Activated naive CD8-positive, alpha-beta T cell treated with anti-CD3 and anti-CD28 coated beads, Interleukin-2, amount 10 ng/mL, durations not matched to agents 7 days and 5 days (primary cell): ENCODE measurements at regions of chr16 and their contacts with region 1.

Region 1: DNA sequence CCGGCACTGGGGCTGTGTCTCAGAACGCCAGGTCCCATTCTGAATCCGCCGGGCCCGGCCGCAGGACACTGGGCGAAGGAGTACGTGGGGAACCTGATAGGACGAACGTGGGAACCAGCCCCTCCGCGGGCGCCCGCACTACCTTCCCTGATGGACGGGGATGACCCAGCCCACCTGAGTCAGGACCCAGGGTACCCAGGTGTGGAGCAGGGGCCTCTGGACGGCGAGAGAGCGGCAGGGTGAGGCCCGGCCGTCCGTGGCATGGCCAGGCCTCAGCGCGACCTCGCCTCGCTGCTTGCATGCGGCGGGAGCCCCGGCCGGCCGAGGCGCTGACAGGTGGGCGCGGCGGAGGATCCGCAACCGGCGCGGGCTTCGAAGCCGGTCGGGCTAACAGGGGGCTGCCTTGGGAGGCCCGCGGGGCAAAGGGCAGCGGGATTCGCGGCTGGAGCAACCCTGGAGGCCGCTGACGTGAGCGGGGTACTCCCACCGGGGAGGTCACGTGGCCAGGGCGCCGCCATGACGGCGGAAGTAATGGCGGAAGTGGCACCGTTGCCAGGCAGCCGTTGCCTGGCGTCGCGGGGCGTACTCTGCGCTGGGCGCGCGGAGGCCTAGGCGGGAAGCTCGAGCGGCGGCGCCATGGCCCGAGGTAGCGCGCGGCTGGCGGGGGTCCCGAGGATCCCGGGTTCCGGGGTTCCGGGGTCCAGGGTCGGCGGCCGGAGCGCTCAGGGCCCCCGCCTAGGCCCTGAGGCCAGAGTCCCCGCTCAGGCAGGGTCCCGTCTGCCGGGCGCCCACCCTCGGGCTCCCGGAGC is at the start of gene WDR90:
- DNase-seq: peak; percentile 95
- ATAC-seq: peak; percentile 88
- H3K4me3 Mint-ChIP-seq: peak within 1 kb of the TSS; percentile 80
- H3K27ac Mint-ChIP-seq: peak within 1 kb of the TSS; percentile 73
- H3K4me1 Mint-ChIP-seq: peaks cover 3% of the 10 kb centered on the region
- H3K27me3 Mint-ChIP-seq: no peaks in the 10 kb centered on the region
- total RNA-seq, gene WDR90: 73.2 to 79.1 TPM

Region 2: GRCh38 chr16:636206-637080 is 12.5 kb before region 1 on chr16 and contains the start of gene METTL26:
- POLR2A ChIA-PET with region 1: interaction called, 13 read pairs
- DNase-seq: peak; percentile 96
- ATAC-seq: peak; percentile 76
- H3K4me3 Mint-ChIP-seq: peak within 1 kb of the TSS; percentile 94
- H3K27ac Mint-ChIP-seq: peak within 1 kb of the TSS; percentile 94
- H3K4me1 Mint-ChIP-seq: peaks cover 6% of the 10 kb centered on the region
- H3K27me3 Mint-ChIP-seq: no peaks in the 10 kb centered on the region
- total RNA-seq, gene METTL26: 75.7 to 81.2 TPM